ENCODE measurements at regions of chr6 and their contacts with region 1.

Region 1: DNA sequence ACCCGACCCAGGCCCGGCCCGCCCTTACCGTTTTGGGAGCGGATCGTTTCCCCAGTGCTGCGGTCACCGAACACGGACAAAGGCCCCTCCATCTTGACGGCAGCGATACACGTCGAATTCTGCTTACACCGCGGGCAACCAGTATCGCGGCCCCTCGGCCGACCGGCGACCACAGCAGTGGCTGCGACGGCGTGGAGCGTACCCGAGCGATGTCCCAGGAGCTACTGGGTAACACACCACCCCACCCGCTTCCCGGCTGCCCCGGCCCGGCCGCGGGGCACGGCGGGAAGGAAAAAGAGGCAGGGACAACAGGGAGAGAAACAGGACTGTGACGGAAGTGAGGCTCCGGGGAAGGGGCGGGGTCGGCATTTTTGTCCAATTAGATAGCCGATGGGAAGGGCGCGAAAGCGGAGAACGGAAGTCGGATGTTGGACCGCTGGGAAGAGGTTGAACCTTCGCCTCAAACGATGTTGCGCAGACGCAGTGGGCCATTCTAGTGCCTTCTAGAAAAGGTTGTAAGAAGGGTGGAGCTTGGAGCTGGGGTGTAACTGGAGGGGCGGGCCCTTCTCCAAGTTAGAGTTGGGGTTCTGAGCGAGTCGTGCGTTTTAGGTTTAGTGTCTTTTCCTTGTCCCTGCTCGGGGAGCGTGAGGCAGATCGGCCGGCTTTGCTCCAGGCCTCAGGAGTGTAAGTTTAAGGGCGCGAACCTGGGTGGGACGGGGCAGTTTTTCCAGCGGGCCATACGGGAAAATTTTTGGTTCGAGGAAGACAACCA is at the start of gene TCP1:
- DNase-seq: peak; percentile 100
- H3K4me3 Mint-ChIP-seq: peak within 1 kb of the TSS; percentile 99
- H3K27ac Mint-ChIP-seq: peak within 1 kb of the TSS; percentile 98
- H3K4me1 Mint-ChIP-seq: peaks cover 28% of the 10 kb centered on the region
- H3K27me3 Mint-ChIP-seq: no peaks in the 10 kb centered on the region
- CTCF ChIP-seq: no peak
- total RNA-seq, gene TCP1: 341 and 351 TPM in 2 replicates

Region 2: GRCh38 chr6:158999666-159000403 is 789.7 kb before region 1 on chr6 and contains the start of gene RSPH3:
- CTCF ChIA-PET with region 1: no interaction called
- POLR2A ChIA-PET with region 1: no interaction called
- intact Hi-C with region 1: no loop called
- DNase-seq: peak; percentile 96
- H3K4me3 Mint-ChIP-seq: peak within 1 kb of the TSS; percentile 100
- H3K27ac Mint-ChIP-seq: peak within 1 kb of the TSS; percentile 84
- H3K4me1 Mint-ChIP-seq: peaks cover 21% of the 10 kb centered on the region
- H3K27me3 Mint-ChIP-seq: no peaks in the 10 kb centered on the region
- CTCF ChIP-seq: no peak
- total RNA-seq, gene RSPH3: 13.1 and 14.5 TPM in 2 replicates

Region 3: GRCh38 chr6:159701411-159701999 is 88.1 kb before region 1 on chr6:
- CTCF ChIA-PET with region 1: no interaction called
- POLR2A ChIA-PET with region 1: interaction called, 167 read pairs
- intact Hi-C with region 1: no loop called
- DNase-seq: peak; percentile 92
- H3K4me3 Mint-ChIP-seq: peak overlapping the region; percentile 39
- H3K27ac Mint-ChIP-seq: peak overlapping the region; percentile 82
- H3K4me1 Mint-ChIP-seq: peaks cover 14% of the 10 kb centered on the region
- H3K27me3 Mint-ChIP-seq: no peaks in the 10 kb centered on the region
- CTCF ChIP-seq: no peak

Region 4: DNA sequence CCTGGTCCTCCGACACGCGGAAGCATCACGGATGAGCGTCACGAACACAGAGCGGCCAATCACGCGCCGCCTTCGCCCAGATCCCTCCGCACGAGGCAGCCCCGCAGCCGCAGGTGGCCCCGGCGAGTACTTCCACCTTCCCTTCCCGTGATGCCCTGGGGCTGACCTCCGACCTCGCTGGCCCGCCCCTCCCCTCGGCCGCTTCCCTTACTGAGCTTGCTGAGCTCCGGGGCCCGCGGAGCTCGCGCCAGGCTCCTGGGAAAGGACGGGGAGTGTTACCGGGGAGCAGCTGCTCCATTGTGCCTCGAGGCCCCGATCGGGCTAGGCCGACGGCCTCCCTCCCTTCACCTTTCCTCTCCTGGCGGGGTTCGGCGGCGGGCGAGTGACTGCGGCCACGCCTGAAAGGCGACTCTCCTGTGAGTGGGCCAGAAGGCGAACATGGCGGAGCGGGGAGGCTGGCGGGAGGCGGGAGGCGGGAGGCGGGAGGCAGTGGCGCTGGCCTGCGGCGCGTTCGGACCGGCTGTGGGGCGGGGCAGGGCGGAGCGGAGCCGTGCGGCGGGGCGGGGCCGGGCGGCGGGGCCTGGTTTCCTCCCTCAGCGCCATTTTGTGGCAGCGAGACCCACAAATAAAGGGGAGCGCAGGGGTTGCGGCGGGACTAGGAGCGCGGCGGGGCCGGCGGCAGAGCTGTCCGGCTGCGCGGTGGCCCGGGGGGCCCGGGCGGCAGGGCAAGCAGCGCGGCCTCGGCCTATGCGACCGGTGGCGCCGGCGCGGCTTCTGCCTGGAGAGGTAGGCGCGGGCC is 62.4 kb before region 1 on chr6 and contains the start of gene WTAP:
- CTCF ChIA-PET with region 1: interaction called, 3 read pairs
- POLR2A ChIA-PET with region 1: interaction called, 198 read pairs
- intact Hi-C with region 1: loop called (anchors 1 kb)
- DNase-seq: peak; percentile 96
- H3K4me3 Mint-ChIP-seq: peak within 1 kb of the TSS; percentile 93
- H3K27ac Mint-ChIP-seq: peak within 1 kb of the TSS; percentile 98
- H3K4me1 Mint-ChIP-seq: peaks cover 17% of the 10 kb centered on the region
- H3K27me3 Mint-ChIP-seq: no peaks in the 10 kb centered on the region
- CTCF ChIP-seq: no peak
- total RNA-seq, gene WTAP: 116 and 142 TPM in 2 replicates

Region 5: GRCh38 chr6:159777240-159777904 is 12.2 kb before region 1 on chr6:
- CTCF ChIA-PET with region 1: no interaction called
- POLR2A ChIA-PET with region 1: interaction called, 33 read pairs
- intact Hi-C with region 1: no loop called
- DNase-seq: no peak
- H3K4me3 Mint-ChIP-seq: no peak overlapping the region
- H3K27ac Mint-ChIP-seq: no peak overlapping the region
- H3K4me1 Mint-ChIP-seq: peaks cover 7% of the 10 kb centered on the region
- H3K27me3 Mint-ChIP-seq: no peaks in the 10 kb centered on the region
- CTCF ChIP-seq: no peak

Region 6: GRCh38 chr6:159852877-159853276 is 63.3 kb after region 1 on chr6:
- CTCF ChIA-PET with region 1: interaction called, 34 read pairs
- POLR2A ChIA-PET with region 1: interaction called, 44 read pairs
- intact Hi-C with region 1: loop called (anchors 1 kb)
- DNase-seq: peak; percentile 41
- H3K4me3 Mint-ChIP-seq: no peak overlapping the region
- H3K27ac Mint-ChIP-seq: no peak overlapping the region
- H3K4me1 Mint-ChIP-seq: no peaks in the 10 kb centered on the region
- H3K27me3 Mint-ChIP-seq: no peaks in the 10 kb centered on the region
- CTCF ChIP-seq: peak; percentile 28

Region 7: DNA sequence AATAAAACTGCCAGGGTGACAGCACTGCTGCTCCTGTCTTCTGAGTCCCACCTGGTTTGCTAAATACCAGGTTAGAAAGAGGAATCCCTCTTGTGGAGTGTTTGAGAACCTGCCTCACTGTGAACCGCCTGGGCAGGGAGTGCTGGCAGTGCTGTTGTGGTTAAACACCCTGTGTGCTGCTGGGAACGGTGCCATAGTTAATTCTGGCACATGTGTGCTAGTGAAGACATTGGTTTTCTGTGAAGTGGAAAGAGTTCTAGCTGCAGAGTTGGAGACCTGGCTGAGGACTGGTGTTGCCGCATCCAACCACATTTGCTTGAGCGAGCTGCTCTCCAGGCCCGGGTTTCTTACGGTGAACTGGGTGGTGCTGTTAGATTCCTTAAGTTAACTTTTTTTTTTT is 252.0 kb after region 1 on chr6:
- CTCF ChIA-PET with region 1: interaction called, 3 read pairs
- POLR2A ChIA-PET with region 1: interaction called, 26 read pairs
- intact Hi-C with region 1: loop called (anchors 5 kb)
- DNase-seq: peak; percentile 97
- H3K4me3 Mint-ChIP-seq: peak overlapping the region; percentile 77
- H3K27ac Mint-ChIP-seq: peak overlapping the region; percentile 66
- H3K4me1 Mint-ChIP-seq: peaks cover 58% of the 10 kb centered on the region
- H3K27me3 Mint-ChIP-seq: no peaks in the 10 kb centered on the region
- CTCF ChIP-seq: peak; percentile 34

Measured in MCF 10A (cell line).